Left colon (tissue), 2 donors: ENCODE measurements at regions of chr10 and their contacts with region 1.

Region 1: GRCh38 chr10:31318854-31319601 is at the start of gene ZEB1:
- DNase-seq: peak; percentile 91 to 94
- ATAC-seq: peak; percentile 91
- total RNA-seq, gene ZEB1: 8.5 to 24.9 TPM

Region 2: GRCh38 chr10:31031558-31032257 is 287.3 kb before region 1 on chr10 and contains the start of gene ZNF438:
- intact Hi-C with region 1: loop called in 1 of 2 experiments (anchors 5 kb)
- DNase-seq: peak; percentile 91 to 96
- ATAC-seq: peak; percentile 94
- total RNA-seq, gene ZNF438: 3.8 to 6.5 TPM